ENCODE measurements at regions of chr3 and their contacts with region 1.

Region 1: GRCh38 chr3:136861890-136862616 is at the start of gene NCK1:
- DNase-seq: peak; percentile 99
- H3K4me3 Mint-ChIP-seq: peak within 1 kb of the TSS; percentile 97
- H3K27ac Mint-ChIP-seq: peak within 1 kb of the TSS; percentile 99
- H3K4me1 Mint-ChIP-seq: peaks cover 40% of the 10 kb centered on the region
- H3K27me3 Mint-ChIP-seq: no peaks in the 10 kb centered on the region
- total RNA-seq, gene NCK1: 34.7 and 35.3 TPM in 2 replicates

Region 2: DNA sequence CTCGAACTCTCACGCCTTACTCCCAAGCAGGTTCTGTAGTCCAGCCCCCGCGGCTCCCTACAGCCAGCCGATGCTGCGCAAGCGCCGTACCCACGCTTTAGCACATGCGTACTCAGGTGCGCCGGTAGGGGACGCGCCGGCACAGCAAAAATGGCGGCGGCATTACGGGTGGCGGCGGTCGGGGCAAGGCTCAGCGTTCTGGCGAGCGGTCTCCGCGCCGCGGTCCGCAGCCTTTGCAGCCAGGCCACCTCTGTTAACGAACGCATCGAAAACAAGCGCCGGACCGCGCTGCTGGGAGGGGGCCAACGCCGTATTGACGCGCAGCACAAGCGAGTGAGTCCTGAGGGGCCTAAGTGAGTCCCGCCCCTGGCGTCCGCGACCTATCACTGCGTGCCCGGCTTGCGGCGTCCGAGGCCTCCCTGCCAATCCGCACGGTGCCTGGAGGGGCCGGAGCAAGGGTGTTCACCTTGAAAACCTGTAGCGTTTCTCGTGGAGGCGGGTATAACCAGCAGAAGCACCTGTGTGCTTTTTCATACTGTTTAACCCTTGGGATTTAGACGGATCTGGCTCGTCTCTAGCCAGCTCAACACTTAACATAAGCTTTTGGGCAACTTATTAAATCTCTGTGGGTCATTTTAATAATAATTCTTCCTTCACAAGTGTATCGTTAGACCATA is 611.7 kb before region 1 on chr3 and contains the start of gene PCCB:
- intact Hi-C with region 1: loop called (anchors 1 kb)
- DNase-seq: peak; percentile 97
- H3K4me3 Mint-ChIP-seq: peak within 1 kb of the TSS; percentile 91
- H3K27ac Mint-ChIP-seq: peak within 1 kb of the TSS; percentile 95
- H3K4me1 Mint-ChIP-seq: peaks cover 16% of the 10 kb centered on the region
- H3K27me3 Mint-ChIP-seq: no peaks in the 10 kb centered on the region
- total RNA-seq, gene PCCB: 45.4 and 55.9 TPM in 2 replicates

Region 3: DNA sequence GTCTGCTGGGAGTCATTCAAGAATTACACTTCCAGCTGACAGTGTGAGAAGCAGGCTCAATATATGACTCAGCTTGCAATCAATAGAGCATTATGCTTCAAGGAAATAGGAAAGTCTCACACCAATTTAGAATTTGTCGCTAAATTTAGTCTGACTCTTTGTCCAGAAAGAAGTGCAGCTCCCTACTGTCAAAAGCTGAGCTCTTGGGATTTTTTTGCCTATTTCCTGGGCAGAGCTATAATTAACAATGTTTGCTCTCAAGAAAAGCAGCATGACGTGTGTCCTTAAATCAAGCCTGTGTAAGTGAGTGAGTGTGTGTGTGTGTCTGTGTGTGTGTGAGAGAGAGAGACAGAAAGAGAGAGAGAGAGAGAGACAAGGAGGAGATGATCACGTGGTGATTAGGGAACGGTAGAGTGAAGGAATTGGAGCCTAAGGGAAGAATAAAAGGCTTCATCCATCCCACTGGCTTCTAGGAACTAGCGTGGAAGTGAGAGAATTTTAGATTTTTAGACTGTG is 59.5 kb before region 1 on chr3:
- intact Hi-C with region 1: no loop called
- DNase-seq: no peak
- H3K4me3 Mint-ChIP-seq: no peak overlapping the region
- H3K27ac Mint-ChIP-seq: no peak overlapping the region
- H3K4me1 Mint-ChIP-seq: peaks cover 5% of the 10 kb centered on the region
- H3K27me3 Mint-ChIP-seq: peaks cover 4% of the 10 kb centered on the region

Region 4: GRCh38 chr3:136818769-136819391 is 43.2 kb before region 1 on chr3 and contains the start of gene SLC35G2:
- intact Hi-C with region 1: loop called (anchors 1 kb)
- DNase-seq: peak; percentile 79
- H3K4me3 Mint-ChIP-seq: peak within 1 kb of the TSS; percentile 87
- H3K27ac Mint-ChIP-seq: peak within 1 kb of the TSS; percentile 81
- H3K4me1 Mint-ChIP-seq: peaks cover 21% of the 10 kb centered on the region
- H3K27me3 Mint-ChIP-seq: peaks cover 38% of the 10 kb centered on the region
- total RNA-seq, gene SLC35G2: 3.4 and 3.8 TPM in 2 replicates

Region 5: GRCh38 chr3:136899622-136900158 is 37.6 kb after region 1 on chr3:
- intact Hi-C with region 1: loop called (anchors 5 kb)
- DNase-seq: peak; percentile 37
- H3K4me3 Mint-ChIP-seq: no peak overlapping the region
- H3K27ac Mint-ChIP-seq: peak overlapping the region; percentile 10
- H3K4me1 Mint-ChIP-seq: peaks cover 34% of the 10 kb centered on the region
- H3K27me3 Mint-ChIP-seq: no peaks in the 10 kb centered on the region

Region 6: GRCh38 chr3:136919799-136920580 is 57.9 kb after region 1 on chr3:
- intact Hi-C with region 1: loop called (anchors 2 kb)
- DNase-seq: peak; percentile 81
- H3K4me3 Mint-ChIP-seq: peak overlapping the region; percentile 51
- H3K27ac Mint-ChIP-seq: peak overlapping the region; percentile 53
- H3K4me1 Mint-ChIP-seq: peaks cover 42% of the 10 kb centered on the region
- H3K27me3 Mint-ChIP-seq: no peaks in the 10 kb centered on the region

Region 7: GRCh38 chr3:136938334-136938733 is 76.3 kb after region 1 on chr3:
- intact Hi-C with region 1: loop called (anchors 5 kb)
- DNase-seq: no peak
- H3K4me3 Mint-ChIP-seq: no peak overlapping the region
- H3K27ac Mint-ChIP-seq: peak overlapping the region; percentile 40
- H3K4me1 Mint-ChIP-seq: peaks cover 37% of the 10 kb centered on the region
- H3K27me3 Mint-ChIP-seq: no peaks in the 10 kb centered on the region

Region 8: DNA sequence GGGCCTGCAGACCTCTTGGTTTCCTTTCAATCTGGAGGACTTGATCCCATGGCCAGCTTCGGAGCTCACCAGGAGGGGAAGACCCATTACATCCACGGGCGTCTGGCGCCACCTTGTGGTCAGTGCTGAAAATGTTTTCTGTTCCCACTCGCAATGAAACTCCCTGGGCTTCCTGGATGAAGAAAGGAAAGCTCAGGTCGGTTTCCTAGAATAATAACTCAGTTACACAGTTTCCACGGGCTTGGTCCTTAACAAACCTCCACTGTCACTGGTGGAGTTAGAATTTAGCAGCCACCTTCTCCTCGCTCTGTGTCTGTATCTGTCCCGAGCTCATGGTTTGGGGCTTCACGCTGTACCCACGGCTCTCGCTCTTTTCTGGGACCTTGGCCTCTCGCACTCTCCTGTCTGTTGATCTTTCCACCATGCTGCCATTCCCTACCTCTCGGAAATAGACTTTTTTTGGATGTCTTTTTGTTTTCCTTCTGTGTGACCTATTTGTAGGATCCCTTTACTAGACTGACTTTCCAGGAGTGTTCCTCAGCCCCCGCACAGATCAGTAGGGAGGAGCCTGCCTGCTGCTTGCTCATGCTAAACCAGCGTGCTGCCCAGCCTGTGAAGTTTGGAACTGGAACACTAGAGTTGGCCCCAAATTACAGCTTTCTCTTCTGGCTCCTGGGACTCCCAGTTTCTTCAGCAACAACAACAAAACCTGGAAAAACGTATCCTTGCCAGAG is 152.1 kb after region 1 on chr3:
- intact Hi-C with region 1: loop called (anchors 1 kb)
- DNase-seq: peak; percentile 95
- H3K4me3 Mint-ChIP-seq: peak overlapping the region; percentile 77
- H3K27ac Mint-ChIP-seq: no peak overlapping the region
- H3K4me1 Mint-ChIP-seq: peaks cover 10% of the 10 kb centered on the region
- H3K27me3 Mint-ChIP-seq: peaks cover 3% of the 10 kb centered on the region

Measured in activated CD4-positive, alpha-beta T cell treated with anti-CD3 and anti-CD28 coated beads, Interleukin-2, amount 10 ng/mL, durations not matched to agents 24 days and 14 days (primary cell).